Mammary epithelial cell (primary cell): ENCODE measurements at regions of chr2 and their contacts with region 1.

Region 1: GRCh38 chr2:241877989-241878970 is 8.8 kb downstream of the RTP5 start:
- DNase-seq: peak; percentile 41
- H3K4me3 ChIP-seq: no peak overlapping the region
- H3K27ac ChIP-seq: no peak overlapping the region
- H3K4me1 ChIP-seq: peaks cover 15% of the 10 kb centered on the region
- H3K27me3 ChIP-seq: no peaks in the 10 kb centered on the region
- CTCF ChIP-seq: peak; percentile 37 to 77

Region 2: DNA sequence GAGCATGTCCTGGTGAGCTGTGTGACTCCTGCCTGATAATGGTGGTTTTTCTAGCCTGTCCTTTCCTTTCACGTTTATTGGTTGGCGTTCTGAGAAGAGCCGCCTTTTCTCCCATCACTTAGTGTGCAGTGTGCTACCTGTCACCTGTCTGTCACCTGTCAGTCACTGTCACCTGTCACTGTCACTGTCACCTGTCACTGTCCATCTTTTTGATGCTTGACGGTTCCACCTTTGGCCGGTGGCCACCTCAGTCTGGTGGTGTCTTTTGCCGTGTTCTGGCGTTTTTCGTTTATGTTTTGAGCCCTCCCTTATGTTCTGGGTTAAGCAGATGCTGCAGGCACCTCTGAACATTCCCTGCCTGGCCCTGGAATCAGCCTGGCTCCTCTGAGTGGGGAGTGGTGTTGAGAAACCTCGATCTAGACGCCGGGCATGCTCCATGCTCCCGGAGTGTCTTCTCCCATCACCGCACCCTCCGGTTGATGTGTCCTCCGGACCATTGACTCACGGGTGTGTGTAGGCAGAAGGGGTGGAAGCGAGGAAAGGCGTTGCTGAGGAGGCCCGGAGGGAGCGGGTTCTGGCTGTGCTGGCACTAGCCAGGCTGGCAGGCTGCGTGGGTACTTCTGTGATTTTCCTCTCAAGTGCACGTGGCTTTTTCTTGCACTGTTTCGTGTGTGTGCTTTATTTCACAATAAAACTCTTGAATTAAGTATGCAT is 212.4 kb before region 1 on chr2:
- CTCF ChIA-PET with region 1: no interaction called
- dilution Hi-C with region 1: no loop called
- in situ Hi-C with region 1: no loop called
- intact Hi-C with region 1: loop called (anchors 1 kb)
- DNase-seq: no peak
- H3K4me3 ChIP-seq: no peak overlapping the region
- H3K27ac ChIP-seq: peak overlapping the region; percentile 46
- H3K4me1 ChIP-seq: peaks cover 12% of the 10 kb centered on the region
- H3K27me3 ChIP-seq: no peaks in the 10 kb centered on the region
- CTCF ChIP-seq: peak in 1 of 2 donors; percentile 0

Region 3: DNA sequence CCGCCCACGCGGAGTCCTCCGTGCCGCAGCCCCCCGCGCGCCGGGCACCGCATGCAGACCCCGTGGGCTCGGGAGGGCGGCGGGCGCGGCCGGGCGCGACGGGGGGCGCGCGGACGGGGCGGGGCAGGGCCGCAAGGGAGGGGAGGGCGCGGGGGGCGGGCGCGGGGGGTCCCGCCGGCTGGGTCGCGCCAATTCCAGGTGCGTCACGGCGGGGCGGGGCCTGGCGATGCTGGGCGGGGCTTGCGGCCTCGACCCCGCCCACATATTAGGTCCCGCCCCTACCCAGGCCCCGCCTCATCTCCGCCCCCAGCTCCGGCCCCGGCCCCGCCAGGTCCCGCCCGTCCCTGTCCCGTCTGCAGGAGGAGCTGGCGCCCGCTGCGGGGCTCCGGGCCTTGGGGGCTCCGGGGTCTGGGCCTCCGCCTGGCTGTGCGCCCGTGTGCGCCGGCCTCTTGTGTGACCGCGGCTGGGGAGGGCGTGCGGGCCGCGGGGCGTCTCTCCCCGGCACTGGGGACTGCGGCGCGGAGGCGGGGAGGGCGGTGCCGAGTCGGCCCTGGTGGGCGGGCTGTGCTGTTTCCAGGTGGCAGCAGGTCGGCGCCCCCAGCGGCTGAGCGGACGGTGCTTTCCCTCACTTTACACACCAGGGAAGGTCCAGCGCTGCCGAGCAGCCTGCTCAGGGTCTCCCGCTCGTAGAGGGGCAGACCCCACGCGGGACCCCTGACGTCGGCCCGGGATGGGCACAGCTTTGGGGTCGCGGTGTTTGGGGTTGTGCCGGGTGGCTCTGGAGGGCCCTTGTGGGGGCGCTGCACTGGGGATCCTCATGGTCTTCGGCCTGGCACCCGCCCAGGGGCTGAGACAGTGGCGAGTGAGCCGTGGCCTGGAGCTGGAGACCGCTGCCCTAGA is 175.9 kb before region 1 on chr2:
- CTCF ChIA-PET with region 1: no interaction called
- dilution Hi-C with region 1: no loop called
- in situ Hi-C with region 1: no loop called
- intact Hi-C with region 1: loop called (anchors 10 kb)
- DNase-seq: peak; percentile 81
- H3K4me3 ChIP-seq: peak overlapping the region; percentile 89 to 93 (median 90)
- H3K27ac ChIP-seq: peak overlapping the region; percentile 50
- H3K4me1 ChIP-seq: peaks cover 13% of the 10 kb centered on the region
- H3K27me3 ChIP-seq: no peaks in the 10 kb centered on the region
- CTCF ChIP-seq: peak; percentile 24 to 40

Region 4: DNA sequence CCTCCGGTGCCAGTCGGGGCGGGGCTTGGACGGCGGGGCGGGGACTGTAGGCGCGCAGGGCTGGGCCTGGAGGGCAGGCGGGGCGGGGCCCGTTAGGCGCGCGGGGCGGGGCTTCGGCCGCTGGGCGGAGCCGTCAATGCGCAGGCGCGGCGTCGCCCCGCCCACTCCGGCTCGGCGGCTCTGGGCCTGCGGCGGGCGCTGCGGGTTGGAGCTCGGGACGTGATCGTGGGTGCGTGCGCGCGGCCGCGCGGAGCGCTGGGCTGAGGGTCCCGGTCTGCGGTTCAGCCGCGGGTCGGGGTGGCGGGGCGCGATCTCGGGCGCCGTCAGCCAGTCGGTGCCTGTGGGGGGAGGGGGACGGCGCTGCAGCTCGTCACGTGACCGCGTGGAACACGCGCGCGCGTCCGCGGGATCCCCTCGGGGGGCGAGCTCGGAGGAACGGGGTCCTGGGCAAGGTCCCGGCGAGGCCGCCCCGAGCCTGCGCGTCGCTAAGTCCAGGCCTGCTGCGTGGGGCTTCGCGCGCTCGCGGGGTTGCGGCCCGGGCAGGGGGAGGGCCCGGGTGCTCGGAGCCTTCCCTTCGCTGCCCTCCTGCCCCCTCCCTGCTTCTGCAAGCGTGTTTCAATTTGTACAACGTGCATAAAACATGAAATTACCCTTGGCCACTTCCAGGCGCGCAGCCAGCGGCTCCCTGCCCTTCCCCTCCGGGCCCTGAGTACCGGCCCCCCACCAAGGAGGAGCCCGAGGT is 143.6 kb before region 1 on chr2 and contains the start of gene D2HGDH:
- CTCF ChIA-PET with region 1: no interaction called
- dilution Hi-C with region 1: no loop called
- in situ Hi-C with region 1: no loop called
- intact Hi-C with region 1: loop called (anchors 5 kb)
- DNase-seq: peak; percentile 70
- H3K4me3 ChIP-seq: peak within 1 kb of the TSS; percentile 49 to 85 (median 72)
- H3K27ac ChIP-seq: no peak within 1 kb of the TSS
- H3K4me1 ChIP-seq: peaks cover 30% of the 10 kb centered on the region
- H3K27me3 ChIP-seq: no peaks in the 10 kb centered on the region
- CTCF ChIP-seq: no peak
- total RNA-seq, gene D2HGDH: 13.8 to 27.2 TPM